HepG2 (cell line): ENCODE measurements at regions of chr14 and their contacts with region 1.

Region 1: GRCh38 chr14:83850092-83850491 is 1679.9 kb upstream of the FLRT2 start:
- DNase-seq: no peak
- ATAC-seq: no peak
- H3K4me3 ChIP-seq: no peak overlapping the region
- H3K27ac ChIP-seq: no peak overlapping the region
- H3K4me1 ChIP-seq: no peaks in the 10 kb centered on the region
- H3K27me3 ChIP-seq: no peaks in the 10 kb centered on the region
- CTCF ChIP-seq: no peak
- EP300 ChIP-seq: no peak
- POLR2A ChIP-seq: no peak
- RAD21 ChIP-seq: no peak

Region 2: DNA sequence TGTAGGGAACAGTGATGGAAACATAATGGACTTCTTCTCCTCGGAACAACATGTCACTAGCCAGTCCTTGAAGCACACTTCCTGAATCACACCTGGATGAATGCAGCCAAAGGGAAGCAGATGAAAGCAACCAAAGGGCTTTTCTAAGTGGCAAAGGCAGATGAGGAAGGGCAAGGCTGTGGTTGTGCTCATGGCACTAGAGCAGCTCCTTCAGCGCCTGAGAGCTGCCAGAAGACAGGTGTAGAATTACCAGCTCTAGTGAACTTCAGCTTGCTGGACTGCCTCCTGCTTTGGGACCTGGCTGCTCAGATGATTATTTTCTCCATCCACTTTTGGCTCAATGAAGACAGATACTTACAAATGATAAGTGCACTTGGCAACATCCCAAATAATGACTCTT is 944.3 kb before region 1 on chr14:
- CTCF ChIA-PET with region 1: no interaction called
- POLR2A ChIA-PET with region 1: no interaction called
- in situ Hi-C with region 1: no loop called
- intact Hi-C with region 1: loop called (anchors 5 kb)
- DNase-seq: no peak
- ATAC-seq: no peak
- H3K4me3 ChIP-seq: no peak overlapping the region
- H3K27ac ChIP-seq: no peak overlapping the region
- H3K4me1 ChIP-seq: no peaks in the 10 kb centered on the region
- H3K27me3 ChIP-seq: no peaks in the 10 kb centered on the region
- CTCF ChIP-seq: no peak
- EP300 ChIP-seq: no peak
- POLR2A ChIP-seq: no peak
- RAD21 ChIP-seq: no peak

Region 3: GRCh38 chr14:83899706-83900105 is 49.6 kb after region 1 on chr14:
- CTCF ChIA-PET with region 1: no interaction called
- POLR2A ChIA-PET with region 1: no interaction called
- in situ Hi-C with region 1: no loop called
- intact Hi-C with region 1: no loop called
- DNase-seq: no peak
- ATAC-seq: no peak
- H3K4me3 ChIP-seq: no peak overlapping the region
- H3K27ac ChIP-seq: no peak overlapping the region
- H3K4me1 ChIP-seq: no peaks in the 10 kb centered on the region
- H3K27me3 ChIP-seq: no peaks in the 10 kb centered on the region
- CTCF ChIP-seq: no peak
- EP300 ChIP-seq: no peak
- POLR2A ChIP-seq: no peak
- RAD21 ChIP-seq: no peak

Region 4: GRCh38 chr14:84340938-84341337 is 490.8 kb after region 1 on chr14:
- CTCF ChIA-PET with region 1: no interaction called
- POLR2A ChIA-PET with region 1: no interaction called
- in situ Hi-C with region 1: no loop called
- intact Hi-C with region 1: no loop called
- DNase-seq: no peak
- ATAC-seq: no peak
- H3K4me3 ChIP-seq: no peak overlapping the region
- H3K27ac ChIP-seq: no peak overlapping the region
- H3K4me1 ChIP-seq: no peaks in the 10 kb centered on the region
- H3K27me3 ChIP-seq: no peaks in the 10 kb centered on the region
- CTCF ChIP-seq: no peak
- EP300 ChIP-seq: no peak
- POLR2A ChIP-seq: no peak
- RAD21 ChIP-seq: no peak